ENCODE measurements at regions of chr10 and their contacts with region 1.

Region 1: DNA sequence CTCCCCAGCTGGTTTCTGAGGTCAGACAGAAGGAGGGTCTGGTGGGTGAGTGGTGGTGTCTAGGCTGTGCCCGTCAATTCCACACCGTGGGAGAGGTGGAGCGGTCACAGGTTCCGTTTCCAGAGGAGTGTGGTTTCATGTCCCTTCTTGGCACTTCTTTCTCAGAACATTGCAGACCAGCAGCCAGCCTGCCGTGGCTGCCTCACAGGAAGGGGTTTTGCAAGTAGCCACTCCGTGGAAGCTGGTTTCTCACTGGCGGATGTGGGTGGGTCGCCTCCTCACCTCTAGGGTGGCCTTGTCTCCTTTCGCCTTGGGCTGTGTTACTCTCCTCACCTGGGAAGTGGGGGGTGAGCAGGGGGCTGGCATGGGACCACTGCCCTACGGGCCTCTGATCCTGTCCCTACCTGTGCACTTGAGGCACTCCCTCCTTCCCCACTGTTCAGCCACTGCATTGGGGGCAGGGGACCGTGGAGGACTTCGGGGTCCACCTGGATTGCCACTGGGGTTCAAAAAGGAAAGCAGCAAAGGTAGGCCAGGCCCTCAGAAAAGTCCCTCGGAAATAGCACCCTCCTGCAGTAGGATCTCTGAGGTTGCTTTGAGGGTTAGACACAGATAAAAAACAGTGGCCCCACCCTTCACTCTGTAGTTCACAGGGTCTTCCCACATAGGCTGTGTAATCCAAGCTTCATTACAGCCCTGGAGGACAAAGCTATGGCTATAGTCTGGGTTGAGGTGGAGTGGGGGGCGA is 33.9 kb downstream of the TSPAN14 start:
- DNase-seq: peak; percentile 86
- H3K4me3 Mint-ChIP-seq: peak overlapping the region; percentile 75
- H3K27ac Mint-ChIP-seq: peak overlapping the region; percentile 91
- H3K4me1 Mint-ChIP-seq: peaks cover 98% of the 10 kb centered on the region
- H3K27me3 Mint-ChIP-seq: no peaks in the 10 kb centered on the region

Region 2: GRCh38 chr10:80459047-80459931 is 28.7 kb before region 1 on chr10:
- CTCF ChIA-PET with region 1: interaction called, 27 read pairs
- POLR2A ChIA-PET with region 1: interaction called, 404 read pairs
- DNase-seq: peak; percentile 88
- H3K4me3 Mint-ChIP-seq: peak overlapping the region; percentile 94
- H3K27ac Mint-ChIP-seq: peak overlapping the region; percentile 97
- H3K4me1 Mint-ChIP-seq: peaks cover 85% of the 10 kb centered on the region
- H3K27me3 Mint-ChIP-seq: no peaks in the 10 kb centered on the region

Region 3: GRCh38 chr10:80464557-80465450 is 23.2 kb before region 1 on chr10:
- CTCF ChIA-PET with region 1: interaction called, 27 read pairs
- POLR2A ChIA-PET with region 1: interaction called, 404 read pairs
- DNase-seq: no peak
- H3K4me3 Mint-ChIP-seq: peak overlapping the region; percentile 68
- H3K27ac Mint-ChIP-seq: peak overlapping the region; percentile 90
- H3K4me1 Mint-ChIP-seq: peaks cover 99% of the 10 kb centered on the region
- H3K27me3 Mint-ChIP-seq: no peaks in the 10 kb centered on the region

Region 4: GRCh38 chr10:80472234-80473095 is 15.5 kb before region 1 on chr10:
- CTCF ChIA-PET with region 1: interaction called, 27 read pairs
- POLR2A ChIA-PET with region 1: interaction called, 404 read pairs
- DNase-seq: peak; percentile 50
- H3K4me3 Mint-ChIP-seq: peak overlapping the region; percentile 36
- H3K27ac Mint-ChIP-seq: peak overlapping the region; percentile 83
- H3K4me1 Mint-ChIP-seq: peaks cover 86% of the 10 kb centered on the region
- H3K27me3 Mint-ChIP-seq: no peaks in the 10 kb centered on the region

Region 5: GRCh38 chr10:80498833-80499741 is 11.1 kb after region 1 on chr10:
- CTCF ChIA-PET with region 1: interaction called, 64 read pairs
- POLR2A ChIA-PET with region 1: interaction called, 101 read pairs
- DNase-seq: peak; percentile 70
- H3K4me3 Mint-ChIP-seq: peak overlapping the region; percentile 52
- H3K27ac Mint-ChIP-seq: peak overlapping the region; percentile 92
- H3K4me1 Mint-ChIP-seq: peaks cover 97% of the 10 kb centered on the region
- H3K27me3 Mint-ChIP-seq: no peaks in the 10 kb centered on the region

Region 6: DNA sequence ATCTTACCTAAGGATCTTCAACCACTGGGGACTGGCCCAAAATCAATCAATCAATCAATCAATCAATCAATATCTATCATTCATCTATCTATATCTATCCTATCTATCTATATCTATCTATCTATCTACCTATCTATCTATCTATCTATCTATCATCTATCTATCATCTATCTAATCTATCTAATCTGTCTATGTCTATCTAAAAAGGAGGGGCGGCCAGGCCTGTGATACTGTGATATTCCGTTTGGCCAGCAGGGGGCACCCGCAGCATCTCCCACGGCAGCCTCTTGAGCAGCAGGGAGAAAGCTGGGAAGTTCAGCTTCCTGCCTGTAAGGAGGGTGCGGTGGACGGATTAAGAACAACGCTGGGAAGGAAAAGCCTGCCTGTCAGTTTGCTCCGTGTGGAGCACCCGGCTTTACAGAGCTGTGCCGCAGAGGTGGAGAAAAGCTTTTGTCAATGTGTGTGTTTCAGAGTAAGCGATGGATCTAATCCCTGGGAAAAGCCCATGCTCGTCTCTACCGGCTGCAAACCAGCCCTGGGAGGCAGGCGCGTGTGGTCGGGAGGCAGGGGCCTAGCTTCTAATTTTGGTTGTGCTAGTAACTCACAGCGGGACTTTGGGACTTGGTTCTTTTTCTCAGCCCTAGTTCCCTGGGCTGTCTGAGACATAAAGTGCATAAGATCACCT is 174.8 kb after region 1 on chr10:
- CTCF ChIA-PET with region 1: no interaction called
- POLR2A ChIA-PET with region 1: no interaction called
- DNase-seq: peak; percentile 67
- H3K4me3 Mint-ChIP-seq: no peak overlapping the region
- H3K27ac Mint-ChIP-seq: no peak overlapping the region
- H3K4me1 Mint-ChIP-seq: no peaks in the 10 kb centered on the region
- H3K27me3 Mint-ChIP-seq: peaks cover 6% of the 10 kb centered on the region